ENCODE measurements at regions of chr2 and their contacts with region 1.

Region 1: DNA sequence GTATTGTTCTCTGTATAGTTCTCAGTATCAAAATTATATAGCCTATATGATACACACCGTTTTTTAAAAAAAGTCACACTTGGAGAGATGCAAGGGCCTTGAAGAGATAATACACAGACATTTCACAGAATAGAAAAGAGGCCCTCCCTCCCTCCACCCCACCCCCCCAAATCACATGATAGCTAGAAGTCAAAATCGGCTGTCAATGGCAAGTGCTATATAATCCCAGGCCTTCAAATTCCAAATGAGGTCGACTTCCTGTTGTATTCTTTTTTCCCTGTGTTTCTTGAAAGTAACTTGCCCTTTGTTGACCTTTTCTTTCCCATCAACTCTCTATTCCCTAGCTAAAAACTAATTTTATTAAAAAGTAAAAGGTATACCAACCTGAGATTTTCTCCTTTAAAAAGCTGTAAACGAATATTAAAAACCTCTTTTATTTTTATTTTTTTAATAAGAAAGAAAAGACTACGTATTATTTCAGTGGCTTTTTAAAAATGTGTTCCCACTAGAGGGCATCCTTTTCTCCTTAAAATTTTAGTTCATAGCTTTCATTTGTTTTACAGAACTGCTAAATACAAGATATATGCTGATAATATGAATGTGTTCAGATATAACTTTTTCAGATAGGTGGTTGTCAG is 46.6 kb downstream of the KCMF1 start:
- DNase-seq: no peak
- ATAC-seq: no peak
- H3K4me3 ChIP-seq: no peak overlapping the region
- H3K27ac ChIP-seq: peak overlapping the region; percentile 50 to 60; a peak in 4 of 6 replicates
- H3K4me1 ChIP-seq: peaks cover 69% of the 10 kb centered on the region
- CTCF ChIP-seq: peak; percentile 65
- EP300 ChIP-seq: no peak
- POLR2A ChIP-seq: no peak
- RAD21 ChIP-seq: peak; percentile 27 to 37; a peak in 2 of 5 replicates

Region 2: GRCh38 chr2:84735389-84735788 is 282.1 kb before region 1 on chr2:
- CTCF ChIA-PET with region 1: no interaction called
- POLR2A ChIA-PET with region 1: no interaction called
- DNase-seq: no peak
- ATAC-seq: no peak
- H3K4me3 ChIP-seq: no peak overlapping the region
- H3K27ac ChIP-seq: no peak overlapping the region
- H3K4me1 ChIP-seq: no peaks in the 10 kb centered on the region
- CTCF ChIP-seq: no peak
- EP300 ChIP-seq: no peak
- POLR2A ChIP-seq: no peak
- RAD21 ChIP-seq: no peak

Region 3: DNA sequence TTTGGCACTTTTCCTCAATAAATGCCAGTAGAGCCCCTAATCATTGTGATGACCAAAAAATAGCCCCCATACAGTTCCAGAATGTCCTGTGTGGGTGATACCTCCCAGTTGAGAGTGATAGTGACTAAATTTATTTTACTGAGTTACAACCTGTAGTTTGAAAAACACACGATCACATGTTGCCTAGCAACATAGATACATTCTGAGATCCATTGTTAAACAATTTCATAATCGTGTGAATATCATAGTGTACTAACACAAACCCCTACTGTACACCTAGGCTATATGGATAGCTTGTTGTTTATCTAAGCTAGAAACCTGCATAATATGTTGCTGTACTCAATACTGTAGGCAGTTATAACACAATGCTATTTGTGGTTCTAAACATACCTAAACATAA is 15.9 kb before region 1 on chr2:
- CTCF ChIA-PET with region 1: interaction called, 39 read pairs
- POLR2A ChIA-PET with region 1: no interaction called
- DNase-seq: no peak
- ATAC-seq: peak; percentile 36 to 39; a peak in 4 of 6 replicates
- H3K4me3 ChIP-seq: no peak overlapping the region
- H3K27ac ChIP-seq: no peak overlapping the region
- H3K4me1 ChIP-seq: peaks cover 51% of the 10 kb centered on the region
- CTCF ChIP-seq: no peak
- EP300 ChIP-seq: no peak
- POLR2A ChIP-seq: no peak
- RAD21 ChIP-seq: no peak

Region 4: DNA sequence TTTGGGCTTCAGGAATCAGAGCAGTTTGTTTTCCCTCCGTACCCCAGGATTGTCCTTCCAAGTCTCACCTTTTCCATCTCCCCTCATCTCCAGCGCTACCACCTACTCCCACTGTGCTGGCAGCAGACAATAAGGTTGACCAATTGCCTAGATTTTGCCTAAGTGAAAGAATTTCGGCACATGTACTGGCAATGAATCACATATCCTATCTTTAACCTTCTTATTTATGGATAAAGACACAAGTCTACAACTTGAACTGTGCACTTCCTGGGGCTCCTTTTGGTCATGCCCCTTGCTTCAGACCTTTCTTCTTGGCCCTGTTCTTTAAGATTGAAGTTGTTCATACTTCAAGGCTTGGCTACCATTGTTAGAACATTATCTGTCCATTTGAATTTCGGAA is 24.8 kb after region 1 on chr2:
- CTCF ChIA-PET with region 1: interaction called, 14 read pairs
- POLR2A ChIA-PET with region 1: no interaction called
- DNase-seq: no peak
- ATAC-seq: no peak; a peak in 1 of 6 replicates
- H3K4me3 ChIP-seq: no peak overlapping the region
- H3K27ac ChIP-seq: no peak overlapping the region
- H3K4me1 ChIP-seq: 0 out of 3 replicates have a peak, but pooled peaks cover 5% of the 10 kb centered on the region
- CTCF ChIP-seq: no peak
- EP300 ChIP-seq: no peak
- POLR2A ChIP-seq: no peak
- RAD21 ChIP-seq: no peak